ENCODE measurements at regions of chr12 and their contacts with region 1.

Region 1: GRCh38 chr12:7439579-7440505 is 4.1 kb downstream of the CD163L1 start:
- DNase-seq: peak; percentile 11
- H3K4me3 ChIP-seq: peak overlapping the region; percentile 57
- H3K27ac ChIP-seq: peak overlapping the region; percentile 34
- H3K27me3 ChIP-seq: no peaks in the 10 kb centered on the region
- CTCF ChIP-seq: no peak

Region 2: GRCh38 chr12:7210642-7211151 is 229.1 kb before region 1 on chr12:
- CTCF ChIA-PET with region 1: interaction called, 3 read pairs
- POLR2A ChIA-PET with region 1: interaction called, 14 read pairs
- DNase-seq: no peak
- H3K4me3 ChIP-seq: no peak overlapping the region
- H3K27ac ChIP-seq: no peak overlapping the region
- H3K27me3 ChIP-seq: no peaks in the 10 kb centered on the region
- CTCF ChIP-seq: no peak

Measured in AG04450 (cell line).